Right ventricle myocardium inferior (tissue), 1 donor: ENCODE measurements at regions of chr6 and their contacts with region 1.

Region 1: DNA sequence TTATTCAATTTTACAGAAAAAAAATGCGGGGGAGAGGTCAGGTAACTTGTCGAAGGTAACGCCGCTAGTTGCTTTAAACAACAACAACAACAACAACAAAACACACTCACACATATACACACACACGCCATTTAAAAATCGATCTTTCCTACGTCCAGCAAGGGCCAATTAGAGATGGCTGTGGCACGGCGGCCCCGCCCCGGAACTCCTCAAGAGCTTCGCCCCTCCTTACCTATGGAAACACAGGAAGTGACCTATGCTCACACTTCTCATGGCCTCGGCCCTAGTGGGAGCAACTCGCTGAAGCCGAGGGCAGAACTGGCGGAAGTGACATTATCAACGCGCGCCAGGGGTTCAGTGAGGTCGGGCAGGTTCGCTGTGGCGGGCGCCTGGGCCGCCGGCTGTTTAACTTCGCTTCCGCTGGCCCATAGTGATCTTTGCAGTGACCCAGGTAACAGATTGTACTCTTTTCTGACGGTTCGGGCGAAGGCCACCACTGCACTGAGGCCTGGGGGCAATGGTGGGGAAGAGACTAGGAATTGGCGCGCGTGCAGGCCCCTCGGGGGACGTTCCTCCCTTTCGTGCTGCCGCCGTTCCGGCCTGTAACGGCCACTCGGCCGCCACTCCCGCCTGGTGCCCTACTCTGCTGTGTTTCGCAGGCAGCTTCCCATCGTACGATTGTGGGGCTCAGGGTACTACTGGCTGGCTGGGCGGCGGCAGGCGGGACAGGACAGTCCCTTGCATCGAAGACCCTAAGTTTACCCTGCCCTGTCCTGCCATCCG is at the start of gene TBP:
- DNase-seq: peak; percentile 98
- ATAC-seq: peak; percentile 98
- total RNA-seq, gene TBP: 8.7 TPM

Region 2: GRCh38 chr6:169751242-169752073 is 802.7 kb before region 1 on chr6 and contains the starts of genes DYNLT2 and ERMARD:
- intact Hi-C with region 1: loop called (anchors 1 kb)
- DNase-seq: peak; percentile 95
- ATAC-seq: peak; percentile 99
- total RNA-seq, gene DYNLT2: 0.41 TPM
- total RNA-seq, gene ERMARD: 6.5 TPM

Region 3: GRCh38 chr6:170306324-170307079 is 247.7 kb before region 1 on chr6 and contains the start of gene FAM120B:
- intact Hi-C with region 1: loop called (anchors 5 kb)
- DNase-seq: peak; percentile 99
- ATAC-seq: peak; percentile 99
- total RNA-seq, gene FAM120B: 16.3 TPM

Region 4: GRCh38 chr6:170584181-170584953 is 30.2 kb after region 1 on chr6 and contains the start of gene PDCD2:
- intact Hi-C with region 1: loop called (anchors 1 kb)
- DNase-seq: peak; percentile 98
- ATAC-seq: peak; percentile 99
- total RNA-seq, gene PDCD2: 28.1 TPM